Left cardiac atrium (tissue), 4 donors: ENCODE measurements at regions of chr2 and their contacts with region 1.

Region 1: GRCh38 chr2:177489719-177490301 is 97.2 kb downstream of the AGPS start:
- DNase-seq: no peak
- ATAC-seq: peak in 1 of 2 donors; percentile 47

Region 2: DNA sequence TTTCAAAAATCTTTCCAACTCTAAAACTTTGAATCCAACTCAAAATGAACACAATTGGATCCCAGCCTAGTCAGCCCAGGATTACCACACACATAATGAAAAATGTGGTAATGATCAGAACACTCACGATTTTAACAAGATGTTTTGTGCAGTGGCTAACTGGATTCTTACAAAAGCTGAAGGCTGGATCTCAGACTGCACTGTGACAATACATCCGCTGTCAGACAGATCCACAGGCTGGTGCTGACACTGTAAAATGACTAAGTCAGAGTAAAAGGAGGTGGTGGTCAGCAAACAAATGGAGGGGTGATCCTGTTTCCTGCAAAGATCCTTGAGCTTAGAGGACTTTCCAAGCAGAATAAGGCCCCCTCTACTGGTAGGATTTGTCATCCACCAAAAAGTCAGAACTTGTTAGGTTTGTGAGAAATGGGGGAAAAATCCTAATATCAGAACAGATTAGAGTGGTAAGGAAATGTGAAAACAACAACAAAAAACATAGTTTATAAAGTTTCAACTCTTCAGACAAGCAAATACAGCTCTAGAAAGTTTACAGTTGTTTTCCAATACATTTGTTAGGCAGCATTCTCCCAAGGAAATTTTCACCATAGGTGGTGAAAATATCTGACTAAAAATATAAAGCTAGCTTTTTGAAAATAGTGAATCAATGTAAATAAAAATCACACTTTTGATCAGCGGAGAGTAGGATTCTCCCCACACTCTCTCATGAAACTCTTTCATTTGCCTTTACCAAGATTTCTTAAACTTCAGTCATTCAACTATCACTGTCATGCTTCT is 114.7 kb after region 1 on chr2:
- intact Hi-C with region 1: loop called in 1 of 2 experiments (anchors 10 kb)
- DNase-seq: no peak
- ATAC-seq: peak; percentile 68 to 74

Region 3: GRCh38 chr2:177651833-177652232 is 162.0 kb after region 1 on chr2:
- intact Hi-C with region 1: no loop called
- DNase-seq: no peak
- ATAC-seq: no peak

Region 4: DNA sequence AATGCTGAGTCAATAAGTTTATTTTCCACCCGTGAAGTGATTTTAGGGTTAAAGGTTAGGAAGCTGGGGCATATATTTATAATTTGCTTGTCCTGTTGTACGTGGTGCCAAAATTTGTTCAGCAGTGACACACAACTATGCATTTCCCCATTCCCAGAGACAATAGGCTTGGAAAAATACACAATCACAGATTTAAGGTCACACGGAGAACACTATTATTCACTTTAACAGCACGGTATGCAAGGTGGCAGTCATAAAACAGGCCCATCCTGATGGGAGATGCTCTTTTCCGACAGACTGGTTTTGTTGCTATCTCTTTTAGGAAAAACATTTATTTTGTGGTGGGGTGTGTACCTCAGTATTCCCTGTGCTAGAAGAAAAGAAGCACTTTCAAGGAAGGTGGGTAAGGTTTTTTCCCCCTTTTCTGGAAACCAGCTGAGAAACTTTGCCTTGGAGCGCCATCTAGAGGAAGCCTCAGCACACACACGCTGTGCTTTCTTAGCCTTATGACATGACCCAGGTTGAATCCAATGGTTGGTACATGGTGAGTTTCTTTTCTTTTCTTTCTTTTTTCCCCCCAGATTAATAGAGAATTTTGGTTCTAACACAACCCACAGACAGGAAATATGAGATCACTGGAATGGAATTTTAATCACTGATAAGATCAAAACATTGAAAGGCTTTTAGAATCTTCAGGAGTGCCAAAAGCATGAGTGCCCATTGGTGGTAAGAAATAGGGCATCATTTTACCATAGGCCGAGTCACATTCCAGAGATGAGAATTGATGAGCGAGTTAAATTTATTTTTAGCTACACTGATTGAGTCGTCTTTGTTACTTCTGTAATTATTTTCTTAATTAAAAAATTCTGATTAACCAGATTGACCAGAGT is 234.8 kb after region 1 on chr2:
- intact Hi-C with region 1: loop called in 1 of 2 experiments (anchors 5 kb)
- DNase-seq: peak; percentile 41
- ATAC-seq: peak; percentile 66 to 71

Region 5: GRCh38 chr2:177763532-177764265 is 273.9 kb after region 1 on chr2:
- intact Hi-C with region 1: loop called in 1 of 2 experiments (anchors 10 kb)
- DNase-seq: peak; percentile 84
- ATAC-seq: peak; percentile 85 to 90